ENCODE measurements at regions of chr17 and their contacts with region 1.

Region 1: DNA sequence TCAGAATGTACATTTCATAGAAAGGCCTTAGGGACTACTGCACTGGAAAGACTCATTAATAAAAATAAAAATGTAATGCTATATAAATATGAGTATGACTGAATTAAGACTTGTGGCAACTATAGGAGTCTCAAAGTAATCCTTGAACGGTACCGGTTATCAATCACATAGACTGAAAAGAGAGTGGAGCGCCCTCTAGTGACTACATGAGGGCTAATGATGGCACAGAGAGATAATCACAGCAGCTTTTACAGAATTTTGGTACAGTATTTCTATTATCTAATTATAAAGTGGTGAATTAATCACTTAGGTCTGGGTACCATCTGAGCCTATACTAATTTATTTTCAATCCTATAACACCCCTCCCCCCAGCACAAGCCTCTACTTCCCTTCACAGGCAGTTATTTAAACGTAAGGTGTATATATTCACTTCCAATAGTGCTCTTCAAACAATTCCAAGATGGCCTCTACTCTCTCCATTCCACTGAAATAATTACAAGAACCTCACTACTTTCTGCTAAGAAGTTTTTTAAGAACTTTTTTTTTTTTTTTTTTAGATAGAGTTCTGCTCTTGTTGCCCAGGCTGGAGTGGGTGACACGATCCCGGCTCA is 40.7 kb upstream of the ANKFY1 start:
- DNase-seq: peak; percentile 67
- CTCF ChIP-seq: peak; percentile 65

Region 2: DNA sequence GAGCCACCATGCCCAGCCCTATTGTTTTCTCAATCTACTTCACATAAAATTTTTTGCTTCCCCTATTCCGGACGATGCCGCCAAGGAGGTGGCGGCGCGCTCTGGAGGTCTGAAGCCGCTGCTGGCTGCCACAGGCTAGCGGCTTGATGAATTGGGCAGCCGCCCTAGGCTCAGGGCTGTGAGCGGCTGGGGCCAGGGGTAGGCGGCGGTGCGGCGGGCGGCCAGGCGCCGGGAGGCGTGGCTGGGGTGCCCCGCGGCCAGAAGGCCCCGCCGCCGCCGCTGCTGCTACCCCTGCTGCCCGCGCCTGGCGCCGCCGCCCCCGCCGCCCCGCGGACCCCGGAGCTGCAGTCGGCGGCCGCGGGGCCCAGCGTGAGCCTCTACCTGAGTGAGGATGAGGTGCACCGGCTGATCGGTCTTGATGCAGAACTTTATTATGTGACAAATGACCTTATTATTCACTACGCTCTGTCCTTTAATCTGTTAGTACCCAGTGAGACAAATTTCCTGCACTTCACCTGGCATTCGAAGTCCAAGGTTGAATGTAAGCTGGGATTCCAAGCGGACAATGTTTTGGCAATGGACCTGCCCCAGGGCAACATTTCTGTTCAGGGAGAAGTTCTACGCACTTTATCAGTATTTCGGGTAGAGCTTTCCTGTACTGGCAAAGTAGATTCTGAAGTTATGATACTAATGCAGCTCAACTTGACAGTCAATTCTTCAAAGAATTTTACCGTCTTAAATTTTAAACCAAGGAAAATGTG is 82.4 kb before region 1 on chr17:
- CTCF ChIA-PET with region 1: no interaction called
- POLR2A ChIA-PET with region 1: no interaction called
- DNase-seq: no peak
- CTCF ChIP-seq: no peak

Region 3: GRCh38 chr17:4293572-4293971 is 10.9 kb before region 1 on chr17:
- CTCF ChIA-PET with region 1: interaction called, 16 read pairs
- POLR2A ChIA-PET with region 1: no interaction called
- DNase-seq: peak; percentile 47
- CTCF ChIP-seq: no peak

Region 4: DNA sequence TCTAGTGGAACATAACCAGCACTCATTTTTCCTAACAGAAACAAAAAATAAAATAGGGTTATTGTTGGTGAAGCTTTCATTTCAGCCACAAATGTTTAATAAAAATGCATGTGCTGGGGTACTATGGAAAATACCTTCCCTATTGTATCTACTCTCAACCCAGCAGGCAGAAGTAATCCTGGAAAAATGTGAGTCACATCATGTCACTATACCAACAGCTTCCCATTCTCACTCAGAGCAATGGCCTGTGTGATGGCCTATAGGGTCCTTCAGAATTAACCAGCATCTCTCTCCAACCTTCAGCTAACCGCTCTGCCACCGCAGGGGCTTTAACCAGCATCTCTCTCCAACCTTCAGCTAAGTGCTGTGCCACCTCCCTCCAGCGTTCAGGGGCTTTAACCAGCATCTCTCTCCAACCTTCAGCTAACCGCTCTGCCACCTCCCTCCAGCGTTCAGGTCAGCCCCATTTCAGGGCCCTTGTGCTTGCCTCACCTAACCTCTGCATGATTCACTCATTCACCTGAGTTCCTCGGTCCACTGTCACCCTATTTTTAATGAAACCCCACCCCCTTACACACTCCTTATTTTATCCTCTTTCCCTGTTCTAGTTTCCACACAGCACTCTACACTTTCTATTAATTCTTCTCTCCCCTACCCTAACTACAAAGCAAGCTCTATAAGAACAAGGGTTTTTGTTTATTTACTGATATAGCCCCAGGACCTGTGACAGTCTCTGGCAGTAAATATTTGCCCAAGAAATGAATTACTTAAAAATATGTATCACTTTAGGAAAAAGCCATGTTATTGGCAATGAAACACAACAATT is 28.0 kb after region 1 on chr17:
- CTCF ChIA-PET with region 1: interaction called, 10 read pairs
- POLR2A ChIA-PET with region 1: no interaction called
- DNase-seq: no peak
- CTCF ChIP-seq: no peak

Region 5: DNA sequence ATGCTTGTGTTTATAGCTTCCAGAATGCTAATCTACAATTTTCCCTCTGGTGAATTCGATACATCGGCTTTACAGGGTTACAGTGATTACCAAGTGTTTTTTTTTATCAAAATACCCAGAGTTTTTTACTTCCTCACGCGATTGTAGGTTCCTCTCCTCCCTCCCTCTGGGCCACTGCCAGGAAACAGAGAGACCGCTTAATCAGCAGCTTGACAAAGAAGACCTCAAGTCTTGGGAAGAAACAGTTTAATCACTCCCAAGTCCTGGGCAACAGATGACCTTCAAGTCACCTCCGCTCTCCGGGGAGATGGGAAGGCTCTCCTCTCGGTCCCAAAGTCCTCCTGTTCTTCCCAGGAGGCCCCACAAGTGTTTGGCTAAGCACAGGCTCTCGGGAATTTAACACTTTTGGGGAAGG is 303.3 kb after region 1 on chr17:
- CTCF ChIA-PET with region 1: no interaction called
- POLR2A ChIA-PET with region 1: no interaction called
- DNase-seq: no peak
- CTCF ChIP-seq: no peak

Measured in GM10248 (cell line).